ENCODE measurements at regions of chr9 and their contacts with region 1.

Region 1: DNA sequence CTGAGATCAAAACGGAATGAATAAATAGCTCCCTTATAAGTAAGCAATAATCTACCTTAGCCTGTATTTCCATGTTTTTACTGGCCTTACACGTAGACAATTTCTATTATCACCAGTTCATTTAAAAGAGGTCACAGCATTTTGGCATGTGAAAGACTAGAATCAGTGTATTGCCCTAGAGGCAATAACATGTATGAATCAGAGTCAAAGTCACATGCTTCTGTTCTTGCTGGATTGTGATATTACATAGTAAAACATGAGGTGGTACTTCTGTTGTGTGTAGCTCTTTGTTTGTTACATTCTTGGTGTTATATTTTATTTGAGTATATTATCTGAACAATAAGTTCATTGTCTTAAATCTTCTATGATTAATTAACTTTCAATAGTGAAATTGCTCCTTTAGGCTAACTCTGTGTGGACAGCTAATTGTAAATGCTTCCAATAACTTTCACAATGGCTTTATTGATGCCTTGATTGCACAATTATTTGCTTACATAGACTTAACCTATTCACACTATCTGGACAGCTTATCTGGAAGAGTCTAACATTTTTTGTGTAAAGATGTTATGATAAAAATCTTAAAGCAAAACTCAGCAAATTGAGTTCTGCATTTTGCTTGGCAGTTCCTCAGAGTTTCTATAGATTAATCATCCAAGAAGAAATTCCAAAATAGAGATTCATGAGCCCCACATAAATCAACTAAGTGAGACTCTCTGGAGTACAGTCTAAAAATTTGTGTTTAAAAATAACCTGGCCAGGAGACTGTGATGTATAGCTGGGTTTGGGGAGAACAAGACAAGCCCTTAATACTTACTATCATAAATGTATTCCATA is 239.6 kb upstream of the TUSC1 start:
- DNase-seq: no peak
- ATAC-seq: no peak
- H3K4me3 ChIP-seq: no peak overlapping the region
- H3K4me3 Mint-ChIP-seq: no peak overlapping the region
- H3K27ac ChIP-seq: no peak overlapping the region
- H3K27ac Mint-ChIP-seq: no peak overlapping the region
- H3K4me1 ChIP-seq: no peaks in the 10 kb centered on the region
- H3K4me1 Mint-ChIP-seq: no peaks in the 10 kb centered on the region
- H3K27me3 ChIP-seq: no peaks in the 10 kb centered on the region
- H3K27me3 Mint-ChIP-seq: no peaks in the 10 kb centered on the region
- CTCF ChIP-seq: no peak

Region 2: DNA sequence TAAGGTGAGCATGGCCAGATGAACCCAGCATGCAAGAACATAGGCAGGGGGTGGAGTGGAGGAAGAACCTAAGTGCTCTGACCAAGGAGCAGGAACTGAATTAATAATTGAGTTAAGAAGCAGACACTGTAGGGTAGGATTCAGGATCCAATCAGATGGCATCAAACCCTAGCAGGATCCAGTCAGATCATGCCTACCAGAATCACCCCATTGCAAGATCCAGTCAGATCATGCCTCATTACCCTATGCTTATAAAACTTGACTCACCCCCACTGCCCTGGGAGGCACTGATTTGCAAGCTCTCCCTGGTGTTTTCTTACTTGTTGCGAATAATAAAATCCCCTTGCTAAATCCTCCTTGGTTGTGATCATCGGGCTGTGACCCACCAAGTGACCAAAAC is 259.2 kb before region 1 on chr9:
- CTCF ChIA-PET with region 1: no interaction called
- POLR2A ChIA-PET with region 1: no interaction called
- intact Hi-C with region 1: loop called in 1 of 2 experiments (anchors 10 kb)
- DNase-seq: no peak
- ATAC-seq: no peak
- H3K4me3 ChIP-seq: no peak overlapping the region
- H3K4me3 Mint-ChIP-seq: no peak overlapping the region
- H3K27ac ChIP-seq: no peak overlapping the region
- H3K27ac Mint-ChIP-seq: no peak overlapping the region
- H3K4me1 ChIP-seq: no peaks in the 10 kb centered on the region
- H3K4me1 Mint-ChIP-seq: no peaks in the 10 kb centered on the region
- H3K27me3 ChIP-seq: no peaks in the 10 kb centered on the region
- H3K27me3 Mint-ChIP-seq: no peaks in the 10 kb centered on the region
- CTCF ChIP-seq: no peak

Region 3: GRCh38 chr9:25954209-25954608 is 36.4 kb after region 1 on chr9:
- CTCF ChIA-PET with region 1: no interaction called
- POLR2A ChIA-PET with region 1: no interaction called
- intact Hi-C with region 1: no loop called
- DNase-seq: no peak
- ATAC-seq: no peak
- H3K4me3 ChIP-seq: no peak overlapping the region
- H3K4me3 Mint-ChIP-seq: no peak overlapping the region
- H3K27ac ChIP-seq: no peak overlapping the region
- H3K27ac Mint-ChIP-seq: no peak overlapping the region
- H3K4me1 ChIP-seq: no peaks in the 10 kb centered on the region
- H3K4me1 Mint-ChIP-seq: no peaks in the 10 kb centered on the region
- H3K27me3 ChIP-seq: no peaks in the 10 kb centered on the region
- H3K27me3 Mint-ChIP-seq: no peaks in the 10 kb centered on the region
- CTCF ChIP-seq: no peak

Region 4: GRCh38 chr9:25994605-25995004 is 76.8 kb after region 1 on chr9:
- CTCF ChIA-PET with region 1: no interaction called
- POLR2A ChIA-PET with region 1: no interaction called
- intact Hi-C with region 1: loop called in 1 of 2 experiments (anchors 10 kb)
- DNase-seq: no peak
- ATAC-seq: no peak
- H3K4me3 ChIP-seq: no peak overlapping the region
- H3K4me3 Mint-ChIP-seq: no peak overlapping the region
- H3K27ac ChIP-seq: no peak overlapping the region
- H3K27ac Mint-ChIP-seq: no peak overlapping the region
- H3K4me1 ChIP-seq: no peaks in the 10 kb centered on the region
- H3K4me1 Mint-ChIP-seq: no peaks in the 10 kb centered on the region
- H3K27me3 ChIP-seq: no peaks in the 10 kb centered on the region
- H3K27me3 Mint-ChIP-seq: no peaks in the 10 kb centered on the region
- CTCF ChIP-seq: no peak

Region 5: GRCh38 chr9:26061948-26062571 is 144.2 kb after region 1 on chr9:
- CTCF ChIA-PET with region 1: no interaction called
- POLR2A ChIA-PET with region 1: no interaction called
- intact Hi-C with region 1: no loop called
- DNase-seq: no peak
- ATAC-seq: no peak
- H3K4me3 ChIP-seq: no peak overlapping the region
- H3K4me3 Mint-ChIP-seq: no peak overlapping the region
- H3K27ac ChIP-seq: no peak overlapping the region
- H3K27ac Mint-ChIP-seq: no peak overlapping the region
- H3K4me1 ChIP-seq: no peaks in the 10 kb centered on the region
- H3K4me1 Mint-ChIP-seq: no peaks in the 10 kb centered on the region
- H3K27me3 ChIP-seq: no peaks in the 10 kb centered on the region
- H3K27me3 Mint-ChIP-seq: no peaks in the 10 kb centered on the region
- CTCF ChIP-seq: no peak

Region 6: DNA sequence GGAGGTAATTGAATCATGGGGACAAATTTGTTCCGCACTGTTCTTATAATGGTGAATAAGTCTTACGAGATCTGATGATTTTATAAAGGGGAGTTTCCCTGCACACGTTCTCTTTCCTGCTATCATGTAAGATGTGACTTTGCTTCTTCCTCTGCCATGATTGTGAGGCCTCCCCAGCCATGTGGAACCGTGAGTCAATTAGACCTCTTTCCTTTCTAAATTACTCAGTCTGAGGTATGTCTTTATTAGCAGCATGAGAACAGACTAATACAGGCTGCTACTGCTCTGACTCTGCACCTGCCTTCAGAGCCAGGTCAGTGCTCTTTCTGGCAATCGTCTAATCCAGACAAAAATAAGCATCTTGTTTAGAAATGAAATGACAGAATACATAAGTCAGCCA is 239.6 kb after region 1 on chr9:
- CTCF ChIA-PET with region 1: no interaction called
- POLR2A ChIA-PET with region 1: no interaction called
- intact Hi-C with region 1: no loop called
- DNase-seq: no peak
- ATAC-seq: no peak
- H3K4me3 ChIP-seq: no peak overlapping the region
- H3K4me3 Mint-ChIP-seq: no peak overlapping the region
- H3K27ac ChIP-seq: no peak overlapping the region
- H3K27ac Mint-ChIP-seq: no peak overlapping the region
- H3K4me1 ChIP-seq: no peaks in the 10 kb centered on the region
- H3K4me1 Mint-ChIP-seq: no peaks in the 10 kb centered on the region
- H3K27me3 ChIP-seq: no peaks in the 10 kb centered on the region
- H3K27me3 Mint-ChIP-seq: no peaks in the 10 kb centered on the region
- CTCF ChIP-seq: no peak